Esophagus squamous epithelium (tissue), 5 donors: ENCODE measurements at regions of chr9 and their contacts with region 1.

Region 1: DNA sequence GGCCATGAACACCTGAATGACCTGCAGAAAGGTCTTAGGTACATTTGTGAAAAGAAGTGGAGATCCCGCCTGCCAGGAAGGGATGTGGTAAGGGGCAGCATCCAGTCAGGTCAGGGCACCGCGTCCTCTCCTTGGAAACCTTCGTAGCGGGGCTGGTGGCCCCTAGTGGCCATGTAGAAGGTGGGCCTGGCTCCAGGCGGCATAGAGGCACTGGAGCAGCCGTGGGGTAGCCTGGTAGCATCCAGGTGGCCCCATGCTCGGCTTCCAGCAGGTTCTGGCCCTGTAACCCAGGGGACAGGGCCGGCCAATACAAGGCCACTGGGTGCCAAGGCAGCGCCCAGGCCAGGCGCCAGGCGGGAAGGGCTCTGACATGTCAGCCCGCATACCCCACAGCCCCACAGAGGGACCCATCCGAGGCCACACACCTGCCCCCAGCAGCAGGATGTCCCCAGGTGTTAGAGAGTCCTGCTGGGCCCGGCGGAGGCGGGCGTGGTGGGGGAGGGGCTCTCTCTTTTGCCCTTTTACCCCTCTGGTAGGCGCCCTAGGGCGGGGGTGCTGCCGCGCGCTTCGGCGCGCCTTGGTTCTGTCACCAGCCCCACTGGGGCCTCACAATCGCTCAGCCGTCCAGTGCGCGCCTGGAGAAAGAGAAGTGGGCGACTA is 58.3 kb upstream of the SPATA31E1 start:
- DNase-seq: no peak
- H3K4me3 ChIP-seq: no peak overlapping the region
- H3K27ac ChIP-seq: no peak overlapping the region
- H3K4me1 ChIP-seq: no peaks in the 10 kb centered on the region
- H3K27me3 ChIP-seq: peaks cover 0 to 12% (median 0%) of the 10 kb centered on the region in 4 donors
- CTCF ChIP-seq: no peak
- POLR2A ChIP-seq: no peak

Region 2: DNA sequence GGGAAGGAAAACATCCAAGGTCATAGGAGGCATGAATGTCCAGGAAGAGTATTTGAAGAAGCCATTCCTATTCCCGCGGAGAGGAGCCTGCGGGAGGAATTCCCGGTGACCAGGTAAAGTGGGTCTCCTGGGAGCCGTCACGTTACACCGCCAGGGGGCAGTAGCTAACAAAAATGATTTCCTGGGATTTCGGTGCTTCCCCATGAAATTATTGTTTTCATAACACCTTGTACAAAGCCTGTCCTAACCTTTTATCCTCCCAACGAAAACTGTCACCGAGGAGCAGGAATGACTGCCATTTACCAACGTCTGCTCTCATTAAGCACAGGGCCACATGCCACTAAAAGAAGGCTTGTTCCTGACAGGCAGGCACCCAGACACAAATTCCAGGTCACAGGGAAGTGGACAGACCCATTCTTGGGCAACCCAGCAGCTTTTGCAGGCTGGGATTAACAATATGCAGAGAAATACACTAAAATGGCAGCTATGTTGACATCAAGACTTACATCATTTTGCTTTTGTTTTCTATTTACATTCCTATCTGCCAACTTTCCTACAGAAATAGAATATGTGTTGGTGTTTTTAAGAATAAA is 139.6 kb before region 1 on chr9:
- intact Hi-C with region 1: loop called (anchors 5 kb)
- DNase-seq: no peak
- H3K4me3 ChIP-seq: no peak overlapping the region
- H3K27ac ChIP-seq: peak overlapping the region in 1 of 4 donors; percentile 15
- H3K4me1 ChIP-seq: peaks cover 0 to 20% (median 6%) of the 10 kb centered on the region in 3 donors
- H3K27me3 ChIP-seq: no peaks in the 10 kb centered on the region
- CTCF ChIP-seq: peak; percentile 38 to 75 (median 62)
- POLR2A ChIP-seq: no peak

Region 3: GRCh38 chr9:87751869-87752268 is 72.5 kb before region 1 on chr9:
- intact Hi-C with region 1: no loop called
- DNase-seq: no peak
- H3K4me3 ChIP-seq: no peak overlapping the region
- H3K27ac ChIP-seq: no peak overlapping the region
- H3K4me1 ChIP-seq: no peaks in the 10 kb centered on the region
- H3K27me3 ChIP-seq: peaks cover 0 to 6% (median 0%) of the 10 kb centered on the region in 4 donors
- CTCF ChIP-seq: no peak
- POLR2A ChIP-seq: no peak

Region 4: GRCh38 chr9:88015606-88016005 is 191.3 kb after region 1 on chr9:
- intact Hi-C with region 1: no loop called
- DNase-seq: no peak
- H3K4me3 ChIP-seq: no peak overlapping the region
- H3K27ac ChIP-seq: no peak overlapping the region
- H3K4me1 ChIP-seq: no peaks in the 10 kb centered on the region
- H3K27me3 ChIP-seq: no peaks in the 10 kb centered on the region
- CTCF ChIP-seq: no peak
- POLR2A ChIP-seq: no peak